Activated CD8-positive, alpha-beta T cell treated with anti-CD3 and anti-CD28 coated beads for 36 hours (primary cell): ENCODE measurements at regions of chr2 and their contacts with region 1.

Region 1: DNA sequence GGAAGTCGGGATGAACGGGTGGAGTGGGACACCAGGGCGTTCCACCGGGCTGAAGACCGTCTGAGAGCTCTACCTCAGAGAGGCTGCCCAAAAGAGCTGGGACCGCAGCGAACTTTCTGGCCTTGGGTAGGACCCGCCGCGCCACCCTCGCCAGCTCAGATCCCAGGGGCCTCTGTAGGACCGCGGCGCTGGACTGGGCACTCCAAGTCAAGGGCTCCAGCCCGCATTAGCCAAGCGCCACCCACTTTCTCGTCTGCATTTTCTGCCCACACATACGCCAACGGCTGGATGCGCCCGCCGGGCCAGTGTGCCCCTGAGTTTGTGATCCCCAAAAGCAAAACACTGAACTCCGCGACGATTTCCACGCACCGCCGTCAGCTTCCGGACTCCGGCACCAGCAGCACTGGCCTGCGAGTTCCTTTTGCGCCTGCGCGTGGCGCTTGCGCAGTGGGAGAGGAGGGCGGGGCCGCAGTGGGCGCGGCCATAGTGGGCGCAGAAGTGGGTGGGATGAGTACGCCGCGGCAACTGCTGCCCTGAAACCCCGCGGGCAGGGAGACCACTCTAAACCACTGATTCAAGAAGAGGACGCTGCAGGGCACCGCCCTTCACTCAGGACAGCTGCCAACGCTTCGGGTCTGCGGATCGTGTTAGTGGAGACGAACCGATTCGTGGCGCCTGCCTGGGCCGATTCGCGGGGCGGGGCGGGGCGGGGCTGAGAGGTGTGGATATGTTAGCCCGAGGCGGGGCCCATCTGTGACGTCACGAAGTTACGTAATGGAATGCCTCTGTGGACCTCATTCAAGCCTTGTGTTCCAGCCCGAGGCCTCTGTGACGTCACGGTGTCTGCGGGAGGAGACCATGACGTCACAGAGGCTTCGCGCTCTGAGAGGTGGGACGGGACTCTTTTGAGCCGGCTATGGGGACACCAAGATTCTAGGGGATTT is 10.5 kb downstream of the OSR1 start:
- DNase-seq: peak; percentile 97
- ATAC-seq: peak; percentile 91
- H3K4me3 Mint-ChIP-seq: peak overlapping the region; percentile 91
- H3K27ac Mint-ChIP-seq: peak overlapping the region; percentile 96
- H3K4me1 Mint-ChIP-seq: peaks cover 21% of the 10 kb centered on the region
- H3K27me3 Mint-ChIP-seq: peaks cover 28% of the 10 kb centered on the region
- CTCF ChIP-seq: no peak

Region 2: DNA sequence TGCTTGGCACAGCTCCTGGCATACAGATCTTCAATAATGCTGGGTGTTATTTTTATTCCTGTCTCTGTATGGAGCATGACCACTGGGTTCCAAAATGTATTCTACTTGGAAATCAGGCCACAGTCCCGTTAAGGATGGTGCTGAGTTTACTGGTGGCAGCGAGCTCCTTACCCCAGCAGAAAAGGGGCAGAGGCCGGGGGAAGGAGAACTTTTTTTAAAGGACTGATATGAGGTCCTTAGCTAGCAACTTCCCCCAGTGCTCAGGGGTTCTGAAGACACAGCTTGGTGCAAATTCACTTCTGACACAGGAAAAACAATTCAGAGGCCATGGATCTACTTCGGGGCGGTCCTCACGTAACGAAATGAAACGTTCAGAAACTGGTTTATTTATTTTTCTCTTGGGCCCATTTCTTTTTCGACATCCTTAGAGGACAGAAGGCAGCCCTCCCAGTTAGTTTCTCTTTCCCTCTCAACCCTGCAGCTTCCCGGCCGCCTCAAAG is 788.3 kb before region 1 on chr2:
- CTCF ChIA-PET with region 1: no interaction called
- POLR2A ChIA-PET with region 1: no interaction called
- intact Hi-C with region 1: loop called (anchors 10 kb)
- DNase-seq: no peak
- ATAC-seq: no peak
- H3K4me3 Mint-ChIP-seq: peak overlapping the region; percentile 93
- H3K27ac Mint-ChIP-seq: peak overlapping the region; percentile 95
- H3K4me1 Mint-ChIP-seq: peaks cover 43% of the 10 kb centered on the region
- H3K27me3 Mint-ChIP-seq: no peaks in the 10 kb centered on the region
- CTCF ChIP-seq: no peak

Region 3: GRCh38 chr2:19274439-19274838 is 73.5 kb before region 1 on chr2:
- CTCF ChIA-PET with region 1: no interaction called
- POLR2A ChIA-PET with region 1: no interaction called
- intact Hi-C with region 1: no loop called
- DNase-seq: no peak
- ATAC-seq: no peak
- H3K4me3 Mint-ChIP-seq: no peak overlapping the region
- H3K27ac Mint-ChIP-seq: no peak overlapping the region
- H3K4me1 Mint-ChIP-seq: no peaks in the 10 kb centered on the region
- H3K27me3 Mint-ChIP-seq: no peaks in the 10 kb centered on the region
- CTCF ChIP-seq: no peak

Region 4: DNA sequence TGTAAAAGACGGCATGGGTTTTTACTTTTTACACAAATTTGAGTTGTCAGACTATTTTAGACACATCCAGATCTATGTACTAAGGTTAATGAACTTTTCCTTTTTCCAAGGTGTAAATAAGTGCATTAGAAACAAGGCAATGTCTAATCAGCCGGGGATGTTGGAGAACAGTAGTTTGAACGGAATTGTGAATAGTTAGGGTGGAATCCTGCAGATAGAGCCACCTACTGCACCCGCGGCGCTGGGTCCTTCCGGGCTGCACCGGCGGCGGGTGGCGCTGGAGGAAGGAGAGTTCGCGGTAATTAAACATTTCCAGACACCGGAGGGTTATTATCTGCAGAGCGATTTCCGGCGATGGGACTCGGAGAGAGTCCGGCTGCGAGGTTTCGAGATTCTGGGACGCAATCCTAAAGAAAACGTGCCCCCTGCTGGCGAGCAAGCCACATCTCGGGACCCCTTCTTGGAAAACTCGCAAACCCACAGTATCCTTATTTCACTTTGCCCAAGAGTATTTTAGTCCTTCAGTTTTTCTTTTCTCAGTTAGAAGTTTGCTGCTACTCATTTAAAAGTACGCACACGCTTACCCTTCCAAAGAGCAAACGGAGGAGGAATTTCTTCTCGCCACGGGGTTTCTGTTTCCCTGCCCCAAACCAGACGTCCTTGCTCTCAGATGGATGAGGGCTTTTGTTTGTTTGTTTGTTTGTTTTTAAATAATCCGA is 15.0 kb after region 1 on chr2:
- CTCF ChIA-PET with region 1: interaction called, 56 read pairs
- POLR2A ChIA-PET with region 1: interaction called, 10 read pairs
- intact Hi-C with region 1: no loop called
- DNase-seq: peak; percentile 71
- ATAC-seq: peak; percentile 67
- H3K4me3 Mint-ChIP-seq: peak overlapping the region; percentile 86
- H3K27ac Mint-ChIP-seq: no peak overlapping the region
- H3K4me1 Mint-ChIP-seq: peaks cover 24% of the 10 kb centered on the region
- H3K27me3 Mint-ChIP-seq: peaks cover 53% of the 10 kb centered on the region
- CTCF ChIP-seq: no peak

Region 5: GRCh38 chr2:19377717-19378116 is 29.8 kb after region 1 on chr2:
- CTCF ChIA-PET with region 1: interaction called, 10 read pairs
- POLR2A ChIA-PET with region 1: no interaction called
- intact Hi-C with region 1: no loop called
- DNase-seq: no peak
- ATAC-seq: no peak
- H3K4me3 Mint-ChIP-seq: no peak overlapping the region
- H3K27ac Mint-ChIP-seq: no peak overlapping the region
- H3K4me1 Mint-ChIP-seq: no peaks in the 10 kb centered on the region
- H3K27me3 Mint-ChIP-seq: peaks cover 34% of the 10 kb centered on the region
- CTCF ChIP-seq: no peak

Region 6: GRCh38 chr2:19863303-19864041 is 515.6 kb after region 1 on chr2:
- CTCF ChIA-PET with region 1: interaction called, 3 read pairs
- POLR2A ChIA-PET with region 1: no interaction called
- intact Hi-C with region 1: loop called (anchors 5 kb)
- DNase-seq: peak; percentile 74
- ATAC-seq: peak; percentile 88
- H3K4me3 Mint-ChIP-seq: no peak overlapping the region
- H3K27ac Mint-ChIP-seq: no peak overlapping the region
- H3K4me1 Mint-ChIP-seq: peaks cover 15% of the 10 kb centered on the region
- H3K27me3 Mint-ChIP-seq: no peaks in the 10 kb centered on the region
- CTCF ChIP-seq: peak; percentile 99